ENCODE measurements at regions of chr16 and their contacts with region 1.

Region 1: DNA sequence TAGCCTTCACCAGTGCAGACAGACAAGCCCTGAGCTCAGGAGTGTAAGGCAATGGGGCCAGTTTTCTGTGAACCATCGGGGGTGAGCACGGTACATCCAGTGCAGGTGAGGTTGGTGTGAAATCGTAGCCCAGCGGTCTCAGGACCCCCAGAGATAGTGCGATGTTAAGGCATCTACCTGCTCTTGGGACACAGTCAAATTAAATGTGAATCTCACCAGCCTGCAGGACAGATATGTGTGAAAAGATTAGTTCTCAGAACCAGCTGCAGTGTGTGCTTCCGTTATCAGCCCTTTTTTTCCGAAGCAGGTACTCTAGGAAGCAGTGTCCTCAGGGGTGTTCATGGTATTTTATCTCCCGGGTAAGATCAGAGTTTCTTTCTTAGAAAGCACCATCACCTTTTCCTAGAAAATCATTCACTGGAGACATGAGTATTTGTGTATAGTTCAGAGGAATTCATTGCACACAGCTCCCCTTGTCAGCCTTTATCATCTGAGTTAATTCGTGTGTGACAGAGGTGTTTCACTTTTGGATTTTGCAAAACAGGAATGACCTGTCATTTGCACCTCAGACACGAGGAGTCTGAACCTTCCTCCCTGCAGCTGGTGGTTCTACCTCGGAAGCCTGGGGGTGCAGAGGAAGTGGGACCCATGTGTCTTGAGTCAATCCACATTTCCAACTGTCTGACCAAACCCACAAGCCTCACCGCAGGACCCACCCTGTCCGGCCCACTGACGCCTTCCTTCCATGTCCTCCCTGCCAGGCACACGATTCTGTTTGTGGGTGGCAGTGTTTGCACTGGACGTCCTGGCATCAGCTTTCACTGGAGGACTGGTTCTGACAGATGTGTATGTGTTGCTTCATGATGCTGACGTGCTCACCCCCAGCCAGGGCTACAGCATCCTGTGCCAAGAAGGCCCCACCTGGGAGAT is 107.8 kb downstream of the CLEC16A start:
- DNase-seq: peak; percentile 83
- H3K4me3 Mint-ChIP-seq: peak overlapping the region; percentile 43
- H3K27ac Mint-ChIP-seq: peak overlapping the region; percentile 92
- H3K4me1 Mint-ChIP-seq: peaks cover 85% of the 10 kb centered on the region
- H3K27me3 Mint-ChIP-seq: no peaks in the 10 kb centered on the region

Region 2: GRCh38 chr16:10988164-10988803 is 63.9 kb before region 1 on chr16:
- intact Hi-C with region 1: loop called (anchors 1 kb)
- DNase-seq: peak; percentile 63
- H3K4me3 Mint-ChIP-seq: peak overlapping the region; percentile 62
- H3K27ac Mint-ChIP-seq: peak overlapping the region; percentile 84
- H3K4me1 Mint-ChIP-seq: peaks cover 81% of the 10 kb centered on the region
- H3K27me3 Mint-ChIP-seq: no peaks in the 10 kb centered on the region

Region 3: DNA sequence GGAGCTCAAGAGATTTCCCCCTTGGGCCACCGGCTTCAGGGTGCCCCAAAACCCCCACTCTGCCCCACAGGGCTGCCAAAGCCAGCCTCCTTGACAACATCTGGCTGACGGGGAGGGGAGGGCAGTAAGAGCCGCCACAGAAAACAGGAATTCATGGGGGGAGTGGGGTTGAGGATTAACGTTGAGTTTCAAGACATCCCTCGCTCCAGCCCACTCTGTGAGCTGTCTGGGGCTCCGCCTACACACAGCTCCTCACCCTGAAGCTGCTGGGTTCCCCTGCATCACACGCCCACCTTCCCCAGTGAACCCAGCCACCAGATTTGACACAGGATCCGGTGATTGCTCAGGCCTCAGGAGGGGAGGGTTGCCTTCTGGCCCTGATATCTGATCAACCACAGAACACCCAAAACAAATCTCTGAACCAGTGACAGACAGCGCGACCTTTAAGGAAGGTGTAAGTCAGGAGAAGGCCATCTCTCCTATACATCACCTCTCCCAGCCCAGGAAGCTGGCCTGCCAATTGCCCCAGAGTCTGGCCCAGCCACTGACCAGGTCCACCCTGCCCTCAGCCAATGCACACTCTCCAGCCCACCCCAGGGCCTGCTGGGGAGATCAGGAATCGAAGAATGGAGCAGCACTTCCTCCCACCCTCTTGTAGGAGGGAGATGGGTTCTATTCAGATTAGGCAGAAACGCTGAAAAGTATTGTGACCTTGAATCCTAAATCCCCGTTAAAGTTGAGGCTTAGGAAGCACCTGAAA is 24.3 kb after region 1 on chr16:
- intact Hi-C with region 1: loop called (anchors 1 kb)
- DNase-seq: peak; percentile 70
- H3K4me3 Mint-ChIP-seq: peak overlapping the region; percentile 31
- H3K27ac Mint-ChIP-seq: peak overlapping the region; percentile 94
- H3K4me1 Mint-ChIP-seq: peaks cover 95% of the 10 kb centered on the region
- H3K27me3 Mint-ChIP-seq: no peaks in the 10 kb centered on the region

Region 4: DNA sequence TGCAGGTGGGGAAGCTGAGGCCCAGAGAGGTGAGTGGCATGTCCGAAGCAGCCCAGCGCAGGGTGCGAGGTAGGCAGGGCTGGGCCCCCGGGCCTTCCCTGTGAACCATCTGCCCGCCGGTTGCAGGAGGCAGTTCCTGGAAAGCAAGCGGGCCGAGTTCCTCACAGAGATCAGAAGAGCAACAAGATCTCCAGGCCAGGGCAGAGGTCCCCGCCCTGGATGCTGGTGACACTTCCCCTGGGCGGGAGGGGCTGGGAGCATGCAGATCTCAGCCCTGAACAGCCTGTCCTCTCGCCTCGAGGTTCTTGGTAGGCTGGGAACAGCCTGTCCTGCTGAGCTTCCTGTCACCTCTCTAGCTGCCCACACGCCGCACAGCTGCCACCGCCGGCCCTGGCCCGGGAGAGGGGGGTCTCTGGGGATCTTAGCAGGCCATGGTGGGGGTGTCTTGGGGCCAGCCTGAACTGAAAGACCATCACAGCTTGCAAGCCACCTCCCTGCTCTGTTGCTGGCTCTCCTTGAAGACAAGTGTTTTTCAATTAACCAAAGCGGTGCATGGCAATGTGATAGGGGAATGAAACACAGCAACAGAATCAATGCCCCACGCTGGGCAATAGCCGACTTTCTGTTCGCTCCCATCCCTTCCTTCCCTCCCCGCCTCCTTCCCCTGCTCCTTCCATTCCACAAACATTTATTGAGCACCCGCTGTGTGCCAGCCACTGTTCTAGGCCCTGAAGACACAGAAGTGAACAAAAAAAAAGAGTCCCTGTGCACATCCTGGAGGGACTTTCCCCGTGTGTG is 172.2 kb after region 1 on chr16:
- intact Hi-C with region 1: loop called (anchors 1 kb)
- DNase-seq: peak; percentile 70
- H3K4me3 Mint-ChIP-seq: peak overlapping the region; percentile 76
- H3K27ac Mint-ChIP-seq: peak overlapping the region; percentile 100
- H3K4me1 Mint-ChIP-seq: peaks cover 50% of the 10 kb centered on the region
- H3K27me3 Mint-ChIP-seq: no peaks in the 10 kb centered on the region

Region 5: DNA sequence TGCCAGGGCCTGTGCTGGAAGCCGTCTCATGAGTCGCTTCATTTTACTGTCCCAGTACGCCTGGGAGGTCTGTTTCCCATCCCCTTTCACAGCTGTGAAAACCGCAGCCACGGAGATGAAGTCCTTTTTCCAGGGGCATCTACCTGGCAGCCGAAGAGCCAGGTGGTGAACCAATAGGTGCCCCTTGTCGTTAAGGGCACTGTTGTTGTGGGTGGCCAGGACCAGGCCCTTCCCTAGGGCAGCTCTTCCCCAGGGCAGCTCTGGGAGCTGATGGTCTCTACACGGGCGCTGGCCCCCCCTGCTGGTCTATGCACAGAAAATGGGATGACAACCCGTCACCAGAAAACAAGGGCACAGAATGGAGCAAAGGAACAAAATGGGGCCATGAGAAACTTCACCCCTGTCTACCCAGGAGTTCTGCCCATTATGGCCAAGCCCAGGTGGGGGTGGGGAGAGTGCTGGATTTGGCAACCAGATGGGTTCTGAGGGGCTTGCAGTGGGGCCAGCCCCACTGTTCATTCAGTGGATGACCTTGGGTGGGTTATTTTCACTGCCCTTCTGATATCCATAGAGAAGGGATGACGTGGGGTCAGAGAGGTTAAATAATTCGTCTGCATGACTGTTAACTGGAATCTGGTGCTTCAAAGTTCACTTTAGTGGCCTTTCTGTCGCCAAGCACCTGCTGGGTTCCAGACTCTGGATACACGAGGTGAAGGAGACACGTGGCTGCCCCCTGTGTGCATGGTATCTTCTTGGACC is 304.6 kb after region 1 on chr16:
- intact Hi-C with region 1: loop called (anchors 1 kb)
- DNase-seq: peak; percentile 33
- H3K4me3 Mint-ChIP-seq: no peak overlapping the region
- H3K27ac Mint-ChIP-seq: no peak overlapping the region
- H3K4me1 Mint-ChIP-seq: peaks cover 68% of the 10 kb centered on the region
- H3K27me3 Mint-ChIP-seq: no peaks in the 10 kb centered on the region

Region 6: GRCh38 chr16:11367483-11367906 is 315.4 kb after region 1 on chr16:
- intact Hi-C with region 1: no loop called
- DNase-seq: no peak
- H3K4me3 Mint-ChIP-seq: no peak overlapping the region
- H3K27ac Mint-ChIP-seq: no peak overlapping the region
- H3K4me1 Mint-ChIP-seq: peaks cover 26% of the 10 kb centered on the region
- H3K27me3 Mint-ChIP-seq: no peaks in the 10 kb centered on the region